Panc1 (cell line): ENCODE measurements at regions of chr7 and their contacts with region 1.

Region 1: DNA sequence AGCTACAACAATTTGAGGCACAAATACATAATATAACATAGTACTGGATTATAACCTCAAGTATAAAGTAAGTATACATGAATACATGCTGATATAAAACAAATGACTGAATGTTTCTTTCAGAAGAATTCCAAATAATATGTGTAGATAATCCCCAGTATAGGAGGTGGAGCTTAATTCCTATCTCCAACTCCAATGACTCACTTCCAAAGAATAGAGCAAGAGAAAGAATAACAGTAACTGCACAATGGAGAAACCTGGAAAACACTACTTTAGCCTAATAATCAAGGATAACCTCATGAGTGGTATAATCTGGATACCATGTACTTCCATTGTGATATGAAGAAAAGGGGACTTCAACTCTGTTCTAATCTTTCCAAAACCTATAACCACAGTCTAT is 13.7 kb upstream of the SEMA3C start:
- DNase-seq: no peak
- ATAC-seq: no peak
- H3K4me3 ChIP-seq: no peak overlapping the region
- H3K27ac ChIP-seq: peak overlapping the region; percentile 32
- H3K4me1 ChIP-seq: no peaks in the 10 kb centered on the region
- H3K27me3 ChIP-seq: no peaks in the 10 kb centered on the region
- CTCF ChIP-seq: no peak

Region 2: GRCh38 chr7:80439894-80440821 is 492.4 kb before region 1 on chr7:
- CTCF ChIA-PET with region 1: no interaction called
- POLR2A ChIA-PET with region 1: interaction called, 10 read pairs
- in situ Hi-C with region 1: no loop called
- intact Hi-C with region 1: no loop called
- DNase-seq: no peak
- ATAC-seq: no peak
- H3K4me3 ChIP-seq: no peak overlapping the region
- H3K27ac ChIP-seq: no peak overlapping the region
- H3K4me1 ChIP-seq: no peaks in the 10 kb centered on the region
- H3K27me3 ChIP-seq: no peaks in the 10 kb centered on the region
- CTCF ChIP-seq: no peak

Region 3: GRCh38 chr7:80815733-80816132 is 116.8 kb before region 1 on chr7:
- CTCF ChIA-PET with region 1: no interaction called
- POLR2A ChIA-PET with region 1: no interaction called
- in situ Hi-C with region 1: no loop called
- intact Hi-C with region 1: no loop called
- DNase-seq: no peak
- ATAC-seq: no peak
- H3K4me3 ChIP-seq: no peak overlapping the region
- H3K27ac ChIP-seq: peak overlapping the region; percentile 63; the same call in 1 of the 2 replicates
- H3K4me1 ChIP-seq: peaks cover 15% of the 10 kb centered on the region; the same call in 1 of the 2 replicates
- H3K27me3 ChIP-seq: no peaks in the 10 kb centered on the region
- CTCF ChIP-seq: no peak

Region 4: GRCh38 chr7:80883188-80884025 is 49.1 kb before region 1 on chr7:
- CTCF ChIA-PET with region 1: no interaction called
- POLR2A ChIA-PET with region 1: no interaction called
- in situ Hi-C with region 1: no loop called
- intact Hi-C with region 1: no loop called
- DNase-seq: peak; percentile 97
- ATAC-seq: peak; percentile 90
- H3K4me3 ChIP-seq: no peak overlapping the region
- H3K27ac ChIP-seq: peak overlapping the region; percentile 92
- H3K4me1 ChIP-seq: peaks cover 87% of the 10 kb centered on the region
- H3K27me3 ChIP-seq: no peaks in the 10 kb centered on the region
- CTCF ChIP-seq: no peak